Transverse colon (tissue), 4 donors: ENCODE measurements at regions of chr16 and their contacts with region 1.

Region 1: GRCh38 chr16:72894293-72895151 is 153.4 kb downstream of the ZFHX3 start:
- DNase-seq: no peak
- H3K4me3 ChIP-seq: no peak overlapping the region
- H3K27ac ChIP-seq: no peak overlapping the region
- H3K4me1 ChIP-seq: peaks cover 0 to 9% (median 0%) of the 10 kb centered on the region in 4 donors
- H3K27me3 ChIP-seq: no peaks in the 10 kb centered on the region
- CTCF ChIP-seq: no peak
- EP300 ChIP-seq: no peak
- POLR2A ChIP-seq: no peak

Region 2: DNA sequence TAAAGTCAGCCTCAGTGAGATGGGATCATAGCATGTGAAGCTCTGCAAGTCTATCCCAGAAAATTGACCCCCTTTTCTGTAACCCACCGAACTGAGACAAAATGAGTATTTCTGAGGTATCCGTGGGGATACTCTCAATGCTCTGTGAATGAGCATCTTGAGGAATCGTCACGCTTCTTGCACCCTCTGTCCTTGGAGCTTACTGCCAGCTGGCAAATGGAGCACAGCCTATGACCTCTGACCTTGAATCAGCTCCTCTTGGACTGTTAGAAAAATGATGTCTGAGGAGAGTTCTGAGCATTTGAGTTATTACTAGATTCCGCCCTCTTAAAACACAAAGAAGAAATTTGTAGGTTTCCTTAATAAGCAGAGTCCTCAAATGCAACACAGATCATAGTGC is 188.7 kb before region 1 on chr16:
- in situ Hi-C with region 1: no loop called
- intact Hi-C with region 1: no loop called
- DNase-seq: no peak
- H3K4me3 ChIP-seq: no peak overlapping the region
- H3K27ac ChIP-seq: no peak overlapping the region
- H3K4me1 ChIP-seq: no peaks in the 10 kb centered on the region
- H3K27me3 ChIP-seq: no peaks in the 10 kb centered on the region
- CTCF ChIP-seq: no peak
- EP300 ChIP-seq: no peak
- POLR2A ChIP-seq: no peak

Region 3: DNA sequence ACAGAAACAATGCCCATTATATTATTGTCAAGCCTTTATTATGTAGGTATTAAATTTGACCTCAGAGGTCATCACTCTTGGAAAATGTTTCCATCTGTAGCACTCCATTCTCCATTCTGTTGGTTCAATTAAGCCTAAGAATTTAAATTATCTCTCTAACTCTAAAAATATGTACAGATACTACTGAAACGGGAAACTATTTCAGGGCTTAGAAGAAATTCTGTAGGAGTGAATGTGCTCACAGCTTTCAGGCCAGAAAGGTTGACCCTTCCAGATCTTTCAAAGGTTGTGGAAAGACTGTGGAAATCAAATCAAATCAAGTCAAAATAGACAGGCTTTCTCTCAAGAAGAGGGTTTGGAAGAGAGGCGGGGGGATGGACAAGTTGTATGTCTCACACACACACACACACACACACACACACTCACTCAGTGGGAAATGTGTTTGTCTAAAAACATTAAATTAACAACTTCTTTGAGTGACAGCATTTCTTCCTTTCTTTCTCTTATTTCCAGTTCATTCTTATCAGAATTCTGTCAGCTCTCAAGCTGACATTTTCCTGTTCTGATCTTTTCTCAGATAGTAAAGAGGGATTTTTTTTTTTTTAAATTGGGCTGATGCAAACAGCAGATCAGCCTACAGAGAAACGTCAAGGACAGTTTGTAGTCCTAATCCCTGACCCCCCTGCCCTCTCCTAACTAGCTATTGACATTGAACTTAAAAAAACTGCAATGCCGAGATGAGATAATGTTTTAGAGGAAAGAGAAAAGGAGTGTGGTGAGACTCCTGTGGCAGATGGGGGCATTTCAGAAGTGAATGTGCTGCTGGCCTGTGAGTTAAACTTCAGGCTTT is 292.5 kb after region 1 on chr16:
- in situ Hi-C with region 1: no loop called
- intact Hi-C with region 1: loop called (anchors 5 kb)
- DNase-seq: no peak
- H3K4me3 ChIP-seq: no peak overlapping the region
- H3K27ac ChIP-seq: no peak overlapping the region
- H3K4me1 ChIP-seq: peaks cover 0 to 5% (median 0%) of the 10 kb centered on the region in 4 donors
- H3K27me3 ChIP-seq: no peaks in the 10 kb centered on the region
- CTCF ChIP-seq: no peak
- EP300 ChIP-seq: no peak
- POLR2A ChIP-seq: no peak